ENCODE measurements at regions of chr18 and their contacts with region 1.

Region 1: DNA sequence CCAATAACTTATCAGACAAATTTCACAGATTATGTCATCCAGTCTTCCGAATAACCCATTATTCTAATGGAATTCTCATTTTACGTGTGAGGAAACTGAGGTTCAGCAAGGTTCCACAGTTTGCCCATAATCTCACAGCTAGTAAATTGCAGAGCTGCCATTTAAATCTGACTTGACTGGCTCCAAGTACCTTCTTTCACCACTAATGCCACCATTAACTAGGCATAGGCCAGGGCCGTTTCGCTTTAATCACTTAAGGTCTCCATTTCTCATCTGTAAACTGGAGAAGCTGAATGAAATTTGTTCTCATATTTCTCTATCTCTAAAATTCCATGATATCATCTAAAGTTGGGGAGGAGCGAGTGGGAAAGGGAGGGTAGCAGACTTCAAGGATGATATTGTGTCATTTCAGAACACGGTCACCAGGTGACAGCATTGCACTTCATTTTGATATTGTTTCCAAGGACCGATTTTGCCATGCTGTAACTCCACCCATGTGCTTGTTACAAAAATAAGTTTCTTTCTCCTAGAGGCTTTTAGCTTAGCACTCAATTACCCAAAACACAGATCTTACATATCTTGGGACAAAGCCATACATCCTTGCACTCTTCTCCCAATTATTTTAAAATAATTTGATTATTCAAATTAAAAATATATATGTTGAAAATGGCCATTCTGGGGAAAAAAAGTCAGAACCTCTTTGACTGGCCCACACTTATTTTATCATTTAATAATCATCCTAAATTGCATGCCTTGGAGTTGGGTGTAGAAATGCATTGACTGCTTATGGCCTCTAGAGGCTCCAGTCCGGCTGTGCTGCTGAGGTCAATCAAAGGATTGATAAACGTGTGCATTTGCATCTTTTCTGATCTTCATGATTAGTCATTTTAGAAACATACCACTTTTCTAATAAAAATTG is 123.8 kb downstream of the AKAIN1 start:
- DNase-seq: peak; percentile 50
- H3K4me3 ChIP-seq: no peak overlapping the region
- H3K27ac ChIP-seq: no peak overlapping the region
- H3K4me1 ChIP-seq: peaks cover 10% of the 10 kb centered on the region
- CTCF ChIP-seq: peak; percentile 83

Region 2: GRCh38 chr18:5097116-5097703 is 23.9 kb after region 1 on chr18:
- CTCF ChIA-PET with region 1: no interaction called
- POLR2A ChIA-PET with region 1: interaction called, 5 read pairs
- intact Hi-C with region 1: loop called (anchors 2 kb)
- DNase-seq: no peak
- H3K4me3 ChIP-seq: no peak overlapping the region
- H3K27ac ChIP-seq: no peak overlapping the region
- H3K4me1 ChIP-seq: no peaks in the 10 kb centered on the region
- CTCF ChIP-seq: no peak

Region 3: GRCh38 chr18:5295981-5296705 is 222.9 kb after region 1 on chr18:
- CTCF ChIA-PET with region 1: no interaction called
- POLR2A ChIA-PET with region 1: no interaction called
- intact Hi-C with region 1: loop called (anchors 5 kb)
- DNase-seq: peak; percentile 97
- H3K4me3 ChIP-seq: peak overlapping the region; percentile 86
- H3K27ac ChIP-seq: peak overlapping the region; percentile 92
- H3K4me1 ChIP-seq: peaks cover 43% of the 10 kb centered on the region
- CTCF ChIP-seq: no peak

Region 4: GRCh38 chr18:5424903-5425664 is 351.8 kb after region 1 on chr18:
- CTCF ChIA-PET with region 1: no interaction called
- POLR2A ChIA-PET with region 1: no interaction called
- intact Hi-C with region 1: loop called (anchors 1 kb)
- DNase-seq: peak; percentile 62
- H3K4me3 ChIP-seq: no peak overlapping the region
- H3K27ac ChIP-seq: no peak overlapping the region
- H3K4me1 ChIP-seq: no peaks in the 10 kb centered on the region
- CTCF ChIP-seq: peak; percentile 83